ENCODE measurements at regions of chr5 and their contacts with region 1.

Region 1: DNA sequence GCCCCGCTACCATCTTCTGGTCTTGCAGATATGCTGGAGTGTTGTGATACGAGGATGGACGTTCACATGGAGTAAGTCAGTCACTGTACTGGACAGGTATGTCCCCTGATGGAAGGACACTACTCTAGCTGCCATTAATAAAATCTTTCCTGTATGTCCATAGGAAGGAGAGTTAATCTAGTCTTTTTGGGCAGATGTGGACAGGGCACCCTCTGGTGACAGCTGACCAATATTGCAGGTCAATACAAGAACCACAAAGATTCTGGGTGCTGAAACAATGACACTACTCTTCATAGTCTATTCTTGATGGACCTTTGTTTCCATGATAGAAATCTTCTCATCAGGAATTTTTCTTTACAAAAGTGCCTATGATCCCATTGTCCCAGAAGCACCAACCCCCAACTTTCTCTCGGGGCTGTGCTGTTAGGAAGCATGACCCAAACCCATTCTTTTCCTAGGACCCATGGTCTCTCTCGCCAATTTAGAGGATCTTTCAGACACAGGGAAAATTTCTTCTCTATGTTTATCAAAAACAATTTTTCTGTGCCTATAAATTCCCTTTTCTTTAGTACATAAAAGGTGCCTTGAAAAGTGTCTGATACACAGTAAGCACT is 376.9 kb downstream of the DTWD2 start:
- DNase-seq: peak in 1 of 2 experiments; percentile 30
- H3K4me3 ChIP-seq: no peak overlapping the region
- H3K4me3 Mint-ChIP-seq: no peak overlapping the region
- H3K27ac Mint-ChIP-seq: no peak overlapping the region
- H3K4me1 ChIP-seq: no peaks in the 10 kb centered on the region
- H3K4me1 Mint-ChIP-seq: no peaks in the 10 kb centered on the region
- H3K27me3 ChIP-seq: no peaks in the 10 kb centered on the region
- H3K27me3 Mint-ChIP-seq: peaks cover 5% of the 10 kb centered on the region
- CTCF ChIP-seq: peak; percentile 59 to 70

Region 2: DNA sequence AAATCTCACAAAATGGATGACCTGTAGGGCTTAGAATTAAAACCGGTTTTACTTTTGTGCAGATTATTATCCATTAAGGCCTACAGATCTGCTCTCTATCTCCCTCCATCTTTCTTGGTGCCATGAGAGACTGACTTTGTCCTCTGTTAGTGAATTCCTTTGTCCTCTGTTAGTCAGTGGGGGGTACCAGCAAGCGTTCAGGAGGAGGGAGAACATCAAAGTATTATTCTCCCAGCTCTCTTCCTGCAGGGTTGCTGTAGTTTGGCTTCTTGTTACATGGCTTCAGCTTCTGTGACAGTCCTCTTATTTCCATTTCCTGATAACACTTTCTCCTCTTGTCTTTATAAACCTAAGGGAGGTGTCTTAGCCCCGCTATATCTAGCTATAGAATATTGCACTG is 1186.3 kb before region 1 on chr5:
- CTCF ChIA-PET with region 1: no interaction called
- POLR2A ChIA-PET with region 1: no interaction called
- intact Hi-C with region 1: no loop called
- DNase-seq: no peak
- H3K4me3 ChIP-seq: no peak overlapping the region
- H3K4me3 Mint-ChIP-seq: no peak overlapping the region
- H3K27ac Mint-ChIP-seq: no peak overlapping the region
- H3K4me1 ChIP-seq: no peaks in the 10 kb centered on the region
- H3K4me1 Mint-ChIP-seq: no peaks in the 10 kb centered on the region
- H3K27me3 ChIP-seq: no peaks in the 10 kb centered on the region
- H3K27me3 Mint-ChIP-seq: no peaks in the 10 kb centered on the region
- CTCF ChIP-seq: no peak

Region 3: DNA sequence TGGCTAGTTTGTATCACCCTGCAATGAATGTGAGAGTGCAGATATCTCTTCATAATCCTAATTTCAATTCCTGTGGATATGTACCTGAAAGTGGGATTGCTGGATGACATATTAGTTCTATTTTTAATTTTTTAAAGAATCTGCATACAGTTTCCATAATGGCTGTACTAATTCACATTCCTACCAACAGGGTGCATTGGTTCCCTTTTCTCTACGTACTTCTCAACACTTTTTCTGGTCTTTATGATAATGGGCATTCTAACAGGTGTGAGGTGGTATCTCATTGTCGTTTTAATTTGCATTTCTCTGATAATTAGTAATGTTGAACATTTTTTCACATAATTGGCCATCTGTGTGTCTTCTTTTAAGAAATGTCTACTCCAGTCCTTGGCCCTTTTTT is 550.6 kb before region 1 on chr5:
- CTCF ChIA-PET with region 1: no interaction called
- POLR2A ChIA-PET with region 1: no interaction called
- intact Hi-C with region 1: loop called (anchors 5 kb)
- DNase-seq: peak in 1 of 2 experiments; percentile 9
- H3K4me3 ChIP-seq: no peak overlapping the region
- H3K4me3 Mint-ChIP-seq: no peak overlapping the region
- H3K27ac Mint-ChIP-seq: no peak overlapping the region
- H3K4me1 ChIP-seq: no peaks in the 10 kb centered on the region
- H3K4me1 Mint-ChIP-seq: peaks cover 5% of the 10 kb centered on the region
- H3K27me3 ChIP-seq: no peaks in the 10 kb centered on the region
- H3K27me3 Mint-ChIP-seq: peaks cover 2% of the 10 kb centered on the region
- CTCF ChIP-seq: peak; percentile 32 to 56

Region 4: DNA sequence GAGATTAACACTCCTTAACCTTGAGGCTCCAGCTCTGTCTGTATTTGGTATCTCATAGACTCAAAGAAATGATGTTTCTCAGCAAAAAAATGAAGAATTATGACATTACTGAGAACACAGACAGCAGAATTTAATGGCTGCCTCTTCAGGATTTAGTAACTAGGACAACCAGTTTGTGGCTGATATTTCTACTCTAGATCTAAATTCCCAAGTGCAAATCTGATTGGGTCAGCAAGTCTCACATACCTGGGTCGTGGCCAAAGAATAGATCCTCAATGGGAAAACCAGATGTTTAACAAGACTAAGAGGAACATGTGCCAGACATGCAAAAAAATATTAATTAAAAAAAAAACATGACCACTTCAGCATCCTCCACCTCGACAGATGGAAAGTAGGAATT is 232.0 kb before region 1 on chr5:
- CTCF ChIA-PET with region 1: no interaction called
- POLR2A ChIA-PET with region 1: no interaction called
- intact Hi-C with region 1: loop called (anchors 1 kb)
- DNase-seq: no peak
- H3K4me3 ChIP-seq: no peak overlapping the region
- H3K4me3 Mint-ChIP-seq: no peak overlapping the region
- H3K27ac Mint-ChIP-seq: no peak overlapping the region
- H3K4me1 ChIP-seq: peaks cover 8% of the 10 kb centered on the region; the same call in 1 of the 2 replicates
- H3K4me1 Mint-ChIP-seq: no peaks in the 10 kb centered on the region
- H3K27me3 ChIP-seq: no peaks in the 10 kb centered on the region
- H3K27me3 Mint-ChIP-seq: no peaks in the 10 kb centered on the region
- CTCF ChIP-seq: no peak

Region 5: DNA sequence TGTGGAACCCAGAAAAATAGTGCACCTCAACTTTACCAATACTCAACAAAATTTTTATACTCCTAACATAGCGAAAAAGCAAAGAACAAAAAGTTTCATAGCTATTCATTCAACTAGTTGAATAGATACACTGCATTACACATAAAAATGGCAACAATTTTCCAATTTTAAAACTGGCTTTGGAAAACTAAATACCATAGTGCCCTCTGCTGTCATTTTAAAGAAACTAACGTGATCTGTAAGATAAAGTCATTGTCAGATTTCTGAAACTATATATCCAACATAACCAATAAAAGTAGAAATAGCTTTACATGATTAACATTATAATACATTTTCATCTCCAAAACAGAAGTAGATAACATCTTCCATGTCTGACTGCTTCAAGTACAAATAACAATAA is 345.3 kb after region 1 on chr5:
- CTCF ChIA-PET with region 1: no interaction called
- POLR2A ChIA-PET with region 1: no interaction called
- intact Hi-C with region 1: loop called (anchors 10 kb)
- DNase-seq: no peak
- H3K4me3 ChIP-seq: no peak overlapping the region
- H3K4me3 Mint-ChIP-seq: no peak overlapping the region
- H3K27ac Mint-ChIP-seq: no peak overlapping the region
- H3K4me1 ChIP-seq: no peaks in the 10 kb centered on the region
- H3K4me1 Mint-ChIP-seq: no peaks in the 10 kb centered on the region
- H3K27me3 ChIP-seq: no peaks in the 10 kb centered on the region
- H3K27me3 Mint-ChIP-seq: no peaks in the 10 kb centered on the region
- CTCF ChIP-seq: peak; percentile 31 to 42

Region 6: GRCh38 chr5:119218830-119219782 is 607.7 kb after region 1 on chr5:
- CTCF ChIA-PET with region 1: no interaction called
- POLR2A ChIA-PET with region 1: no interaction called
- intact Hi-C with region 1: no loop called
- DNase-seq: no peak
- H3K4me3 ChIP-seq: no peak overlapping the region
- H3K4me3 Mint-ChIP-seq: no peak overlapping the region
- H3K27ac Mint-ChIP-seq: no peak overlapping the region
- H3K4me1 ChIP-seq: no peaks in the 10 kb centered on the region
- H3K4me1 Mint-ChIP-seq: no peaks in the 10 kb centered on the region
- H3K27me3 ChIP-seq: no peaks in the 10 kb centered on the region
- H3K27me3 Mint-ChIP-seq: no peaks in the 10 kb centered on the region
- CTCF ChIP-seq: no peak

Measured in Caco-2 (cell line).